MCF 10A (cell line): ENCODE measurements at regions of chr6 and their contacts with region 1.

Region 1: GRCh38 chr6:83884523-83884922 is 25.0 kb downstream of the CYB5R4 start:
- DNase-seq: peak; percentile 52
- H3K4me3 Mint-ChIP-seq: no peak overlapping the region
- H3K27ac Mint-ChIP-seq: peak overlapping the region; percentile 3
- H3K4me1 Mint-ChIP-seq: peaks cover 9% of the 10 kb centered on the region
- H3K27me3 Mint-ChIP-seq: no peaks in the 10 kb centered on the region
- CTCF ChIP-seq: peak; percentile 69

Region 2: GRCh38 chr6:84197708-84198107 is 313.2 kb after region 1 on chr6:
- CTCF ChIA-PET with region 1: no interaction called
- POLR2A ChIA-PET with region 1: no interaction called
- intact Hi-C with region 1: no loop called
- DNase-seq: no peak
- H3K4me3 Mint-ChIP-seq: no peak overlapping the region
- H3K27ac Mint-ChIP-seq: no peak overlapping the region
- H3K4me1 Mint-ChIP-seq: peaks cover 8% of the 10 kb centered on the region
- H3K27me3 Mint-ChIP-seq: no peaks in the 10 kb centered on the region
- CTCF ChIP-seq: no peak

Region 3: GRCh38 chr6:84220809-84221409 is 336.4 kb after region 1 on chr6:
- CTCF ChIA-PET with region 1: interaction called, 26 read pairs
- POLR2A ChIA-PET with region 1: interaction called, 4 read pairs
- intact Hi-C with region 1: loop called (anchors 1 kb)
- DNase-seq: peak; percentile 38
- H3K4me3 Mint-ChIP-seq: no peak overlapping the region
- H3K27ac Mint-ChIP-seq: no peak overlapping the region
- H3K4me1 Mint-ChIP-seq: peaks cover 4% of the 10 kb centered on the region
- H3K27me3 Mint-ChIP-seq: no peaks in the 10 kb centered on the region
- CTCF ChIP-seq: peak; percentile 60

Region 4: GRCh38 chr6:84227434-84228197 is 343.1 kb after region 1 on chr6 and contains the start of gene CEP162:
- CTCF ChIA-PET with region 1: interaction called, 19 read pairs
- POLR2A ChIA-PET with region 1: interaction called, 6 read pairs
- intact Hi-C with region 1: loop called (anchors 2 kb)
- DNase-seq: peak; percentile 87
- H3K4me3 Mint-ChIP-seq: peak within 1 kb of the TSS; percentile 94
- H3K27ac Mint-ChIP-seq: peak within 1 kb of the TSS; percentile 72
- H3K4me1 Mint-ChIP-seq: peaks cover 13% of the 10 kb centered on the region
- H3K27me3 Mint-ChIP-seq: peaks cover 18% of the 10 kb centered on the region
- CTCF ChIP-seq: peak; percentile 75
- total RNA-seq, gene CEP162: 2.4 and 2.9 TPM in 2 replicates